ENCODE measurements at regions of chr1 and their contacts with region 1.

Region 1: DNA sequence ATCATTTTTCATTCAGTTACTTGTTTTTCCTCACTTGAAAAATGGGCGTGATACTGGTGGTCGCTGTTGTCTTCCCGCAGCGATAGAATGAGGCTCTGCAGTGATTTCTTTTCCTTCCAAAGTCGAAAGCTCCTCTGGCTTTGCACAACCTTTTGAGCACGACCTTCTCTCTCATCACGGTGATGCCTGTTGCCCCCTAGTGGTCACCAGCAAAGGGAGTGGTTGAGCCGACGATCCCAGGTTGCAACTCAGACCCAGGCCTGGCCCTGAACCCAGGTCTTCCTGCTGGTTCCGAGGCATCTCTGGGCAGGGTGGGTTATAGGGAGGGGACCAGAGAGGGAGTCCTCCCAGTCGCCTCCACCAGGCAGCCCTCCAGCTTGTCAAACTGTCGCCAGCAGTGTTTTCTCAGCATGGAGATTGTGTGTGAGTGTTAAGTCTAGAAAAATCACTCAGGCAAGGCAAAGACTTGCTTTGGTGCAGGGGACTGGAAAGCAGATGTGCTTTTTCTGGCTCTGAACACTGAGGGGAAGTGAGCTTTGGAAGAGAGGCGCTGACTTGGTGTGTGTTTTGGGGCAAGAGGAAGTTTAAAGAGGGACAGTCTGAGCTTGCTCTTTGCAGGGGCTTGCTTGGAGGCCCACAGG is 285.3 kb downstream of the CAMTA1 start:
- DNase-seq: peak; percentile 67
- ATAC-seq: peak; percentile 72
- H3K4me3 Mint-ChIP-seq: no peak overlapping the region
- H3K27ac Mint-ChIP-seq: no peak overlapping the region
- H3K4me1 Mint-ChIP-seq: peaks cover 2% of the 10 kb centered on the region
- H3K27me3 Mint-ChIP-seq: peaks cover 19% of the 10 kb centered on the region
- CTCF ChIP-seq: peak; percentile 77

Region 2: GRCh38 chr1:6727535-6727934 is 343.0 kb before region 1 on chr1:
- CTCF ChIA-PET with region 1: interaction called, 10 read pairs
- POLR2A ChIA-PET with region 1: no interaction called
- intact Hi-C with region 1: loop called (anchors 5 kb)
- DNase-seq: peak; percentile 73
- ATAC-seq: peak; percentile 76
- H3K4me3 Mint-ChIP-seq: no peak overlapping the region
- H3K27ac Mint-ChIP-seq: no peak overlapping the region
- H3K4me1 Mint-ChIP-seq: no peaks in the 10 kb centered on the region
- H3K27me3 Mint-ChIP-seq: peaks cover 3% of the 10 kb centered on the region
- CTCF ChIP-seq: peak; percentile 95

Region 3: DNA sequence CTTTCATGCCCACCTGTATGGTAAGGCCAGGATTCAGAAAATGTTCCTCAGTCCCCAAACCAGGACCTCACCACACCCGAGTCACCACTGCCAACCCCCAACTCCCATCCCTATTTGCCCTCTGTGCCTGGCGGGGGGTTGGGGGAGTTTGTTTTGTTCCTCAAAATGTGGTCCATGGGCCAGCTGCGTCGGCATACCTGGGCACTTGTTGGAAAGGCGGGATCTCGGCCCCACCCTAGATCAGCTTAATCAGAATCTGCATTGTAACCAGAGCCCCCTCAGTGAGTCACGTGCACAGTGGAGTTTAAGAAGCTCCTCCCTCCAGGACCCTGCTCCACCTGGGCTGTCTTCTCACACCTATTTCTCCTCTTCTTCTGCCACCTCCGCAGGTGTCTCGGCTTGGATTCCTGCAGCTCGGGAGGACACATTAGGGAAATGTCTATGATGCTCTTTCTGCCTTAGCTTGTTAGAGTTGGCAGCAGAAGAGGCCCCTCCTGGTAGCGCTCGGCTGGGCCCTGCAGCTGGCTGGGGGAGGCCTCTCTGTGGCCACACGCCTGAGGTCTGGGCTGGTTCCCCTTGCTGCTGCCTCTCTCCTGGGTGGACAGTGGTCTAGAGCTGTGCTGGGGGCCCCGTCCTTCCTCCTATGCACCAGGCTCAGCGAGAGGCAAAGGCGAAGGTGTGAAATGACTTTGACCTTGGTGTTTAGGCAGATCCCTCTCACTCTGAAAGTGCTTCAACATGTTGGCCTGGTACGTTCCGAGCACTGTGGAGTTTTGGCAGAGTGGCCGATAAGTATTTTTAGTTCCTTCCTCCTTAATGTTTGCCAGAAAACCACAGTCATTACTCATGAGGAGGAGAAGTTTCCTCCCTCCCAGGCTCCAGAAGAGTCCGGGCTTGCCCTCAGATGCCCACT is 327.1 kb before region 1 on chr1:
- CTCF ChIA-PET with region 1: no interaction called
- POLR2A ChIA-PET with region 1: no interaction called
- intact Hi-C with region 1: no loop called
- DNase-seq: peak; percentile 53
- ATAC-seq: peak; percentile 50
- H3K4me3 Mint-ChIP-seq: no peak overlapping the region
- H3K27ac Mint-ChIP-seq: no peak overlapping the region
- H3K4me1 Mint-ChIP-seq: peaks cover 17% of the 10 kb centered on the region
- H3K27me3 Mint-ChIP-seq: peaks cover 2% of the 10 kb centered on the region
- CTCF ChIP-seq: no peak

Region 4: DNA sequence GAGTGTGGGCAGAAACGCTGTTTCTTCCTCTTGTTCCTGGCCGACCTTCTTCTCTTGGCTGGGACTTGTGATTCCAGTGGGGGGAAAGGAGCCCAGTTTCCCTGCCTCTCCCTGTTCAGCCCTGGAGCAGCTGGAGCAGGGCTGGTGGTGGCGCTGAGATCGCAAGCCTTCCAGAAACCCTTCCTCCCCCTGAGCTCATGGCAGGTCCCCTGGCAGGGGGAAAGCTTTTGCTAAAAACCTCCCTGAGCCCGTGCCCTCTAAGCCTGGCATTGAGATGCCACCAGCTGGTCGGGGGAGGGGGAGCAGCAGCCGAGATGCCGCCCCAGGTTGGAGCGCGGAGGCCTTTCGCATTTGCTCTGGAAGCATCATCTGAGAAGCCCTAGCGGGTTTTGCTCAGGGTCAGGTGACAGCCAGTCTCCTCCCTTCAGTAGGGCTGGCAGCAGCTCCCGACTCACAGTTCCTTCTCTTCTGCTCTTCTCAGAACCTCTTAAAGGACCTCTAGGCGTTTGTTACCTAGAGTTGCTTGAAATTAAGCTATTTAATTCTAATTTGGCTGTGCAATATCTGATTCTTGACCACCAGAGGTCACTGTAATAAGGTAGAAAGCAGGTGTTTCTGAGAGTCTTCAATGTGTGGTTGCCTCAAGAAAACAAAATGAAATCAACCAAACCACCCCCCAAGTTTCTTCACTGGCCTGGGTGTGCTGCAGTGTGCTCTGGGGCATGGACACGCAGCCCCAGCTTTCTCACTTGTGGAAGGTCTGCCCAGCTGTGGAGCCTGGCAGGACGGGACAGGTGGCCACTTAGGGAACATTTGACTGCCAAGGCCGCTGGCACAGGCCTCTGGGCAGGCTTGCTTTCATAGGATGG is 28.0 kb before region 1 on chr1:
- CTCF ChIA-PET with region 1: interaction called, 18 read pairs
- POLR2A ChIA-PET with region 1: no interaction called
- intact Hi-C with region 1: no loop called
- DNase-seq: no peak
- ATAC-seq: no peak
- H3K4me3 Mint-ChIP-seq: no peak overlapping the region
- H3K27ac Mint-ChIP-seq: no peak overlapping the region
- H3K4me1 Mint-ChIP-seq: no peaks in the 10 kb centered on the region
- H3K27me3 Mint-ChIP-seq: peaks cover 5% of the 10 kb centered on the region
- CTCF ChIP-seq: peak; percentile 52

Region 5: DNA sequence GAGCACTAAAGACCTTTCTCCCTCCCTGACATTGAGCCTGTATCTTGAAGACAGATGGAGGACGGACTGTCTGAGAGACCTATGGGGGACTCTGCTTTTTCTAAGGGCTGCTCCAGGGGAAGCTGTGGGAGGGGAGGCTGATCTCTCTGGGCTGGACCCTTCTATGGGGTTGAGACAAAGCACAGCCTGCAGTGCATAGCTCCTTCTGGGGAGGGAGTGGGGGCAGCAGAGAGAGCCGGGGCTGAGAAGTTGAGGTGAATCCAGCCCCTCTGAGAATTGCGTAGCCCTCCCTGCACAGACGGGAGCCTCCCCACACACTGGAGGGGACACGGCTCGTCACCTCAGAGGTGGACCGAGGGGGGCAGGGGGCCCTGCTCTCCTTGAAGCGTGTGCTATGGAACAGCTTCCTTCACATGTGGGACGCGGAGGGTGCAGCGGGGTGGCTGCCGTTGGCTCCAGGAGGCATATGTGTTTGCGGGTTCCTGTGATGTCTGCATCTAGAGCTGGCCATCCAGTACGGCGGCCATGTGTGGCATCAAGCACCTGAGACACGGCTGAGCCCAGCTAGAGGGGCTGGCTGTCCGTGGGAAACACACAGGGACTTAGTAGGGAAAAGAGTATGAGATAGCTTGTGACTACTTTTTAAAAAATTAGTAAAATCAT is 13.9 kb after region 1 on chr1:
- CTCF ChIA-PET with region 1: interaction called, 11 read pairs
- POLR2A ChIA-PET with region 1: no interaction called
- intact Hi-C with region 1: no loop called
- DNase-seq: no peak
- ATAC-seq: no peak
- H3K4me3 Mint-ChIP-seq: no peak overlapping the region
- H3K27ac Mint-ChIP-seq: no peak overlapping the region
- H3K4me1 Mint-ChIP-seq: no peaks in the 10 kb centered on the region
- H3K27me3 Mint-ChIP-seq: no peaks in the 10 kb centered on the region
- CTCF ChIP-seq: no peak

Measured in activated CD8-positive, alpha-beta T cell treated with anti-CD3 and anti-CD28 coated beads for 36 hours (primary cell).